Left ventricle myocardium superior (tissue), 1 donor: ENCODE measurements at regions of chr1 and their contacts with region 1.

Region 1: DNA sequence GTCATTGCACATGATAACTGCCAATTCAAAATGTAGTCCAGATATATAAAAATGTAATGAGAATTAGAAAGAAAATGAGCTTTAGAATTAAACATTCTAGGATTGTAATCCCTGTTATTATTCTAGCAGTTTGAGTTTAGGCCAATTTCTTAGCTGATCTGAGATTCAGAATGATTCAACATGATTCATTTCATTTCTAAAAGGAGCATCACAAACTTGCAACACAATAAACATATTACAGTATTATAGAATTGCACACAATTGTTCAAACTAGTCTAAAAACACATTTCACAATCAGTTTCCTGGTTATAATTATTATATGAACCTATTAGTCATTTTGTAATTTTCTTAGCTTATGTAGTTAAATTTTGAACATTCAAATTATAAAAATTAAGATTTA is 43.3 kb upstream of the TSHB start:
- DNase-seq: no peak
- ATAC-seq: no peak

Region 2: GRCh38 chr1:115052454-115053083 is 66.3 kb after region 1 on chr1:
- intact Hi-C with region 1: loop called (anchors 10 kb)
- DNase-seq: peak; percentile 37
- ATAC-seq: peak; percentile 72